ENCODE measurements at regions of chr1 and their contacts with region 1.

Region 1: DNA sequence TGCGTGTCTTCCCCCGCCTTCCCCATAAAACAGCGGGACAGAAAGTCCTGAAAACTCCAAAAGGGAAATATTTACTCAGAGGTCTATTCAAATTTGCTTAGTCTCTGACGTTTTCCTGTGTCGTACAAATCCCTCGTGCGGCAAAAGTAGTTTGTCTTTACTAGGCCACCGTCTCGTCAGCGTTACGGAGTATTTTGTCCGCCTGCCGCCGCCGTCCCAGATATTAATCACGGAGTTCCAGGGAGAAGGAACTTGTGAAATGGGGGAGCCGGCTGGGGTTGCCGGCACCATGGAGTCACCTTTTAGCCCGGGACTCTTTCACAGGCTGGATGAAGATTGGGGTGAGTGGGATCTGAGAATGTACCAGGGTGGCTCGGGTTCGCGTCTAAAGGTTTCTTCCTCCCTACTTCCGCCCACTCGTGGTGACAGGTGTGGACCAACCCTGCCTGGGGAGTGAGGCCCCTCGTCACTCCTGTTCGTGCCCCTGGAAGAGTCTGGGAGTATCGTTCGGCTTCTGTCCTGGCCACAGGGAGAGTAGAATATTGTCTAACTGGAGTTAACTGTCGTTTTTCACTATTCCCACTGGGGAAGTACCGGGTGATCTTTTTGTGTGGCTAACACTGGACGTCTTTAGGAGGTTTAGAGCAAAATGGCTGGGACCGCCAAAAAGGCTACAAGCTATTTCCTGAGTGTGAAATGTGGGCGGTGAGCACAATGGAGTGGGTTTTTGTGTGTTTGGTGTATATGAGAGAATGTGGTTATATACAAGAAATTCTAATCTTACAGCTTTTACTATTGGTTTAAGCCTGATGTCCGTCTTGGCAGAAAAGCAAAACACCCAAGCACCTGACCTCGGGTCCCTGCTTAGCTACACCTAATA is at the start of gene ATF6:
- DNase-seq: peak; percentile 77
- H3K4me3 Mint-ChIP-seq: peak within 1 kb of the TSS; percentile 97
- H3K27ac Mint-ChIP-seq: peak within 1 kb of the TSS; percentile 94
- H3K4me1 Mint-ChIP-seq: peaks cover 37% of the 10 kb centered on the region
- H3K27me3 Mint-ChIP-seq: no peaks in the 10 kb centered on the region
- total RNA-seq, gene ATF6: 23.9 and 25.5 TPM in 2 replicates

Region 2: DNA sequence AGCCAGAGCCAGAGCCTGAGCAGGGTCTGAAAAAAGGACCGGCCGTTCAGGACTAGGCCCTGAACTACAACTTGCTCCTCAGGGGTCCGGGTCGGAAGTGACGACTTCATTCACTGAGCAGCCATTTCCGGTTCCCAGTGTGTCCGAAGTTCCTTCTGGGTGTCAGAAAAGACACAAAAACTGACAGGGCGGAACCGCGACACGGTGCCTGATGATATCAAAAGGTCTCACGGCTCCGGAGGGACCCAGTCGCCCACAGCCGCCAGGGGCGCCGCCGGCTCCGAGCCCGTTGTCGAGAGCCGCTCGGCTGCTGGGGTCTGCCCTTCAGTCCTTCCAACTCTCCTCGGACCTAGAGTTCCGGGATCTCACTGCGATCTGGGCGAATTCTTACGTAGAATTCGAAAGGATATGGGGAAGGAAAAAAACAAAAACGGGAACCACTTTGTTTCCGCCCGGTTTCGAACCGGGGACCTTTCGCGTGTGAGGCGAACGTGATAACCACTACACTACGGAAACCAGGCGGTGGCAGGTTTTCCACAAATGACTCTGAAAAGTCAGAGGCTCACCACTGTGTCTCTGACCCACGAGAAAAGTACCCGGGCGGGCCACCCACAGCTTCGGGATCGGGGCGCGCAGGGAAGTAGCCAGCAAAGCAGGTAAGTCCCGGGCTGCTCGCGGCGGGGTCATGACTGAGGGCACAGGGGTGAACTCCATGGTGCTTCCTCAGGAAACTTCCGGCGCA is 366.9 kb before region 1 on chr1:
- intact Hi-C with region 1: loop called (anchors 1 kb)
- DNase-seq: peak; percentile 88
- H3K4me3 Mint-ChIP-seq: peak overlapping the region; percentile 94
- H3K27ac Mint-ChIP-seq: peak overlapping the region; percentile 100
- H3K4me1 Mint-ChIP-seq: peaks cover 50% of the 10 kb centered on the region
- H3K27me3 Mint-ChIP-seq: peaks cover 13% of the 10 kb centered on the region

Region 3: GRCh38 chr1:161749509-161750407 is 16.6 kb before region 1 on chr1 and contains the start of gene DUSP12:
- intact Hi-C with region 1: loop called (anchors 1 kb)
- DNase-seq: peak; percentile 82
- H3K4me3 Mint-ChIP-seq: peak within 1 kb of the TSS; percentile 98
- H3K27ac Mint-ChIP-seq: peak within 1 kb of the TSS; percentile 99
- H3K4me1 Mint-ChIP-seq: peaks cover 32% of the 10 kb centered on the region
- H3K27me3 Mint-ChIP-seq: peaks cover 27% of the 10 kb centered on the region
- total RNA-seq, gene DUSP12: 34.1 and 36.0 TPM in 2 replicates

Region 4: GRCh38 chr1:161933592-161934588 is 167.5 kb after region 1 on chr1:
- intact Hi-C with region 1: no loop called
- DNase-seq: peak; percentile 6
- H3K4me3 Mint-ChIP-seq: peak overlapping the region; percentile 27
- H3K27ac Mint-ChIP-seq: peak overlapping the region; percentile 0
- H3K4me1 Mint-ChIP-seq: peaks cover 22% of the 10 kb centered on the region
- H3K27me3 Mint-ChIP-seq: no peaks in the 10 kb centered on the region

Region 5: DNA sequence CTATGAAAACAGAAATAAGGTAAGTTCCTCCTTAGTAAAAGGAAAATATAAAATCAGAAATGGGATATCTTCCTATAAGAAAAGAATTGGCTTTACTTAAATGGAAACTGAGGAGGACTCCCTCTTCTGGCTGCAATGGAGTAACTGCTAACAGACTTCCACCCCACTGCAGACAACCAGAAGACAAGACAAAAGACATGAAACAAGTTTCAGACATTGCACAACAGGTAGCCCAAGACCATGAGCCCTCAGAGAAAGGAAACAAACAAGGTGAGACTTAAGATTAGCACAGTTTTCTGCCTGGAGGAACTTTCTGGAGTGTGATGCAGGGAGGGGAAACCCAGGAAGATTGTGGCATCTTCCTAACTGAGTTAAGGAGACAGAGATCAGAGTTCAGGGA is 274.3 kb after region 1 on chr1:
- intact Hi-C with region 1: loop called (anchors 1 kb)
- DNase-seq: no peak
- H3K4me3 Mint-ChIP-seq: no peak overlapping the region
- H3K27ac Mint-ChIP-seq: no peak overlapping the region
- H3K4me1 Mint-ChIP-seq: no peaks in the 10 kb centered on the region
- H3K27me3 Mint-ChIP-seq: peaks cover 7% of the 10 kb centered on the region

Region 6: DNA sequence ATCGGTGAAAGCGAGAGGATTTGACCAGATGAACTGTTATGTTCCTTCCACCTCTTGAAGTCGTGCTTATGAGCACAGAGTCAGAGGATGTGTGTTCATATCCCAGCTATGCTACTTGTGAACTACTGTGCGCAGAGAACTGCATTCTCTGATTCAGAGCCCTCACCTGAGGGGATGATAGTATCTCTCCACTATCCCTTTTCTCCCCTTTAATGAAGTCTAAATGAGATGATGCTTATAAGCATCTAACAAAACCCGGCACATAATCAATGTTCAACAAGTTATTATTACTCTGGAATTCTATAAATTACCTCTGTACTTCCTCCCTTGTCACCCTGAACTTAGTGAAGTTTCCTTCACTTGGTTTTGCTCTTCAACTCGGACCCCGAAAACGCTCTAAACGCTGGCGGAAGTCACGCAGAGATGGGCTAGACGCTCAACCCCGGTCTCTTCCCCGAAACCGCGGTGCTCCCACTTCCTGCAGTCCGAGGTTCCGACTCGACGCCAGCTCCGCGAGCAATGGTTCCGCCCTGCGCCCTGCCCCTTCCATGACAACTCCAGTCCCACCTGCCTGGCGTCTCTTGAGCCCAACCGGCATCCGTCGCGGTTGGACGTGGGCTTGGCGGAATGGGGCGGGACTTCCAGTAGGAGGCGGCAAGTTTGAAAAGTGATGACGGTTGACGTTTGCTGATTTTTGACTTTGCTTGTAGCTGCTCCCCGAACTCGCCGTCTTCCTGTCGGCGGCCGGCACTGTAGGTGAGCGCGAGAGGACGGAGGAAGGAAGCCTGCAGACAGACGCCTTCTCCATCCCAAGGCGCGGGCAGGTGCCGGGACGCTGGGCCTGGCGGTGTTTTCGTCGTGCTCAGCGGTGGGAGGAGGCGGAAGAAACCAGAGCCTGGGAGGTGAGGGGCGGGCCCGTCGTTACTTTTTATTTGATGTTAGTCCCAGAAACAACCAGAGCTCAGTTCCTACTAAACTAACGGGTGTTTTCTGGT is 1555.3 kb after region 1 on chr1 and contains the start of gene NUF2:
- intact Hi-C with region 1: loop called (anchors 5 kb)
- DNase-seq: peak; percentile 97
- H3K4me3 Mint-ChIP-seq: peak within 1 kb of the TSS; percentile 92
- H3K27ac Mint-ChIP-seq: peak within 1 kb of the TSS; percentile 98
- H3K4me1 Mint-ChIP-seq: peaks cover 52% of the 10 kb centered on the region
- H3K27me3 Mint-ChIP-seq: peaks cover 3% of the 10 kb centered on the region
- total RNA-seq, gene NUF2: 36.8 and 37.7 TPM in 2 replicates

Measured in activated T-helper 1 cell treated with anti-CD3 and anti-CD28 coated beads, Interleukin-12 subunit alpha, Interleukin-12 subunit beta, Interleukin-2, Interleukin-4 antibody, amounts not matched to agents 30 ng/mL and 10 ng/mL and 1 ng/mL, durations not matched to agents 14 hours and 24 hours and 36 hours (primary cell).